Activated CD4-positive, alpha-beta T cell treated with anti-CD3 and anti-CD28 coated beads, Interleukin-2, amount 10 ng/mL, durations not matched to agents 7 days and 5 days (primary cell): ENCODE measurements at regions of chr6 and their contacts with region 1.

Region 1: GRCh38 chr6:85642774-85643536 is at the start of gene SYNCRIP:
- DNase-seq: peak; percentile 98
- H3K4me3 Mint-ChIP-seq: peak within 1 kb of the TSS; percentile 87
- H3K27ac Mint-ChIP-seq: peak within 1 kb of the TSS; percentile 99
- H3K4me1 Mint-ChIP-seq: peaks cover 44% of the 10 kb centered on the region
- H3K27me3 Mint-ChIP-seq: peaks cover 3% of the 10 kb centered on the region
- total RNA-seq, gene SYNCRIP: 111 to 118 TPM

Region 2: GRCh38 chr6:85669735-85670194 is 26.8 kb after region 1 on chr6:
- CTCF ChIA-PET with region 1: interaction called, 3 read pairs
- POLR2A ChIA-PET with region 1: interaction called, 109 read pairs
- DNase-seq: peak; percentile 68
- H3K4me3 Mint-ChIP-seq: peak overlapping the region; percentile 59
- H3K27ac Mint-ChIP-seq: peak overlapping the region; percentile 89
- H3K4me1 Mint-ChIP-seq: peaks cover 61% of the 10 kb centered on the region
- H3K27me3 Mint-ChIP-seq: no peaks in the 10 kb centered on the region

Region 3: DNA sequence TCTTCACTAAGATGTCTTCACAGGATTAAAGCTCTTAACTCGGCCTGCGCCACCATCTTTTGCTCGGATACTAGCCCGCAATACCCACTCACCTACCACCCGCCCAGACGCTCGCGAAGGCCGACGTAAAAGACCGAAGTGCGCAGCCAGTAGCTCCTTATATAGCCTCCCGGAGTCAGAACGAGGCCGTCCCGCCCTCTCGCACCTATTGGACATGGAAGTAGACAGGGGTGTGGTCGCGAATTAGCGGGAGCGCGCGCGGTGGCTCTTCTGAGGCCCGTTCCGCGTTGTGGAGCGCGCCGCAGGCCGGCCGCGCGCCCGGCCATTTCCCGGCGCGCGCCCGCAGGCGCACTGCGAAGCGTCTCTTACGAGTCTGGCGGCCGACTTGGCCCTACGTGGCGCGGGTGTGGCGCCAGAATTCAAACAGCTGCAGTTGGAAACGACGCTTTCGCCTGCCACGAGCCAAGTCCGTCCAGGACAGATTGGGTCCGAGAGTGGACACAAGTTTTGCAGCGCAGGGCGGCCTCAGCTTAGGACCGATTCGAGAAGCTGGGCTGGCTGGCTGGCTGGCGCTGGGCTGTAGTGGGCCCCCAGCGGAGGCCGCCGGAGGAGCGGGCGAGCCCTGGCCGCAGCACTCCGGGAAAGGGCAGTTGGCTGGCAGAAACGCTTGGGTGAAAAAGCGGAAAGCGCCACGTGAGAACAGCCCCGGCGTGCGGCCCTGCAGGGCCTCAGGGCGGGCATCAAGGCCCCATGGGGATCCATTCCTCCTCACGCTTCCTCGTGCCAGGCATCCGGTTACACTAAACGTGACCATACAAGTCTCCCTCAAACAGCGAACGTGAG is 35.9 kb after region 1 on chr6:
- CTCF ChIA-PET with region 1: interaction called, 7 read pairs
- POLR2A ChIA-PET with region 1: interaction called, 109 read pairs
- DNase-seq: peak; percentile 97
- H3K4me3 Mint-ChIP-seq: peak overlapping the region; percentile 98
- H3K27ac Mint-ChIP-seq: peak overlapping the region; percentile 96
- H3K4me1 Mint-ChIP-seq: peaks cover 51% of the 10 kb centered on the region
- H3K27me3 Mint-ChIP-seq: no peaks in the 10 kb centered on the region

Region 4: DNA sequence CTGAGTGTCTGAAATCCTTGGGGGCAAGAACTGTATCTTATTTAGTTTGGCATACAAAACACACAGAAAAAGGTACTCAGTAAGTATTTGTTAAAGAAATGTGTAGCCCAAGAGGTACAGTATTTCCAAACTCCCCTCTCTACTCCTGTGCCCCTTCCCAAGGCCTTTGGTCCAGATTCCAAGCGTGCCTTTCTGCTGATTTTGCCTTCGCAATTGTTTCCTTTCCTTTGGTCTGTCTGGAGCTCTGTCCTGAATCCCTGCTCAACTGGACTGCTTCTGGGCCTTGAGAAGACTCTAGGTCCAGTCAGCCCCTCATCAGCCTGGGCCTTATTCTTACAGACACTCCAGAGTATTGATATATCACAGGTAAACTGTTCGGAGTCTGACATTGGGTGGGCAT is 121.9 kb after region 1 on chr6:
- CTCF ChIA-PET with region 1: no interaction called
- POLR2A ChIA-PET with region 1: no interaction called
- DNase-seq: no peak
- H3K4me3 Mint-ChIP-seq: no peak overlapping the region
- H3K27ac Mint-ChIP-seq: no peak overlapping the region
- H3K4me1 Mint-ChIP-seq: no peaks in the 10 kb centered on the region
- H3K27me3 Mint-ChIP-seq: peaks cover 10% of the 10 kb centered on the region